MCF 10A (cell line): ENCODE measurements at regions of chr2 and their contacts with region 1.

Region 1: DNA sequence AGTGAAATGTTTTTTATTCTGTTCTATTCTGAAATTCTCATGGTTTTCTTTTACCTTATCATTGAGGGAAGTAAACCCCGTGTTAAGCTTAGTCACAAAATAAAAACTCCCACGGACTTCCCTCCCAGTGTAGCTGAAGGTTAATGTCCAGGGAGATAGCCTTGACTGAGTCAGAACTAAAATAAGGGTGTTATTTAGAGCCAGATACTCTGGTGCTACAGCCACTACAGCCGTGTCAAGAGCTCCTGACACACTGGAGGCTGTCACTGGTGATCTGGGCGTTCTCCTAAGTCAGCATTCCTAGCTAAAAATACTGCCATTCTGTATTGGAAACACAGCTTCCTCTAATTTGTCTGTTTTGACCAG is 82.0 kb upstream of the RANBP2 start:
- DNase-seq: peak; percentile 46
- H3K4me3 Mint-ChIP-seq: no peak overlapping the region
- H3K27ac Mint-ChIP-seq: peak overlapping the region; percentile 35
- H3K4me1 Mint-ChIP-seq: peaks cover 38% of the 10 kb centered on the region
- H3K27me3 Mint-ChIP-seq: no peaks in the 10 kb centered on the region
- CTCF ChIP-seq: no peak

Region 2: DNA sequence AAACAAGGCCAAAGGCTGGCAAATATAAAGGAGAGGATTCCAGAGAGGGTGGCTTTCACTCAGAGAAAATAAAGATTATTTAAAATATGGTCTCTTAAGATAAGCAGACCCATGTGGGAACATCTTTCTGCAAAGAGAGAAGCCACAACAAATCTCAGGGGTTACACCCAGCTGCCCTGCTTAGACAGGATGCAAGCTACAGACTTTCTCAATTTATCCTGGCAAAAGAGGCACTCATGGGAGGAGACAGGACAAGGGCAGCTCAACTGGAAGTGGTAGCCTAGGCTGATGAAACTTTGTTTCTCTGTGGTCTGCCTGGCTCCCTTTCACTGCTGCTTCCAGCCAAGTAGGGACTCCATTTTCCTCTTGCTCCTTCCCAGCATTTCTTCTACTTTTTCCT is 285.4 kb before region 1 on chr2:
- CTCF ChIA-PET with region 1: interaction called, 16 read pairs
- POLR2A ChIA-PET with region 1: no interaction called
- intact Hi-C with region 1: loop called (anchors 1 kb)
- DNase-seq: peak; percentile 11
- H3K4me3 Mint-ChIP-seq: no peak overlapping the region
- H3K27ac Mint-ChIP-seq: no peak overlapping the region
- H3K4me1 Mint-ChIP-seq: peaks cover 6% of the 10 kb centered on the region
- H3K27me3 Mint-ChIP-seq: no peaks in the 10 kb centered on the region
- CTCF ChIP-seq: no peak

Region 3: GRCh38 chr2:108533832-108534583 is 103.3 kb before region 1 on chr2 and contains the start of gene LIMS1:
- CTCF ChIA-PET with region 1: interaction called, 16 read pairs
- POLR2A ChIA-PET with region 1: interaction called, 8 read pairs
- intact Hi-C with region 1: no loop called
- DNase-seq: peak; percentile 90
- H3K4me3 Mint-ChIP-seq: peak within 1 kb of the TSS; percentile 90
- H3K27ac Mint-ChIP-seq: peak within 1 kb of the TSS; percentile 83
- H3K4me1 Mint-ChIP-seq: peaks cover 34% of the 10 kb centered on the region
- H3K27me3 Mint-ChIP-seq: no peaks in the 10 kb centered on the region
- CTCF ChIP-seq: no peak
- total RNA-seq, gene LIMS1: 70.9 and 74.9 TPM in 2 replicates

Region 4: DNA sequence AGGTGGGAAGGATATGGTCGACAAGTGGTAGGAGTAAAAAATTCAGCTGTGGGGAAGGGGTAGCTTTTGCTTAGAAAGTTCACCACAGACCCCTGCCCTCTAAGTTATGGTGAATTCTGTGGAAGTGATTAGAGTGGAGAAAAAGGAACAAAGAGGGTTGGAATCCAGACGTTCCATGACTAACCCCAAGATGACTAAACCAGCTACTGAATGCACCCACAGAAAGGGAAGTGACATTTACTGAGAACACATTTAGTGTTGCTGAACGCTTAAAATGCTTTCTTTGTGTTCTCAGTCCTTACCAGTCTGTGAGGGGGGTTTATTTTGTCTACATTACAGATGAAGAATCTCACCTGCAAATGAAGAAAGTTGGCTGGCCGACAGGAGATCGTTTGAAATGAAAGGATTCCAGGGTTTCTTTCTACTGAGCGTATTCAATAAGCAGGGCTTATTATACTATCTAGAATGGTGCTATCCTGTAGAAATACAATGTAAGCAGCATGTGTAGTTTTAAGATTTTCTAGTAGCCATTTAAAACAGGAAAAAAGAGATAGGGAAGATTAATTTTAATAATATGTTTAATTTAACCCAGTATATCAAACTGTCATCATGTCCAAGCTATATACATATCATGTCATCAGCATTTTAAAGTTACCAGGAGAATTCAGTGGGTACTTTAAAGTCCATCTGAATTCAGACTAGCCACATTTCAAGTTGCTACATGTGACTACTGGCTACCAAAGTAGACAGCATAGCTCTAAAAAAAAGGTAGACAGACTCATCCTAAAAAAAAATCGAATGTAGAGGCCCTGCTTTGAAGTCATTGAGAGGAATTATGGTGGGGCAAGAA is 42.9 kb before region 1 on chr2:
- CTCF ChIA-PET with region 1: interaction called, 120 read pairs
- POLR2A ChIA-PET with region 1: interaction called, 22 read pairs
- intact Hi-C with region 1: loop called (anchors 2 kb)
- DNase-seq: peak; percentile 72
- H3K4me3 Mint-ChIP-seq: peak overlapping the region; percentile 20
- H3K27ac Mint-ChIP-seq: peak overlapping the region; percentile 77
- H3K4me1 Mint-ChIP-seq: peaks cover 63% of the 10 kb centered on the region
- H3K27me3 Mint-ChIP-seq: no peaks in the 10 kb centered on the region
- CTCF ChIP-seq: no peak

Region 5: GRCh38 chr2:108615480-108616090 is 21.7 kb before region 1 on chr2:
- CTCF ChIA-PET with region 1: interaction called, 207 read pairs
- POLR2A ChIA-PET with region 1: interaction called, 26 read pairs
- intact Hi-C with region 1: no loop called
- DNase-seq: no peak
- H3K4me3 Mint-ChIP-seq: no peak overlapping the region
- H3K27ac Mint-ChIP-seq: no peak overlapping the region
- H3K4me1 Mint-ChIP-seq: peaks cover 63% of the 10 kb centered on the region
- H3K27me3 Mint-ChIP-seq: no peaks in the 10 kb centered on the region
- CTCF ChIP-seq: no peak

Region 6: GRCh38 chr2:108786354-108787199 is 149.3 kb after region 1 on chr2 and contains the start of gene CCDC138:
- CTCF ChIA-PET with region 1: no interaction called
- POLR2A ChIA-PET with region 1: no interaction called
- intact Hi-C with region 1: no loop called
- DNase-seq: peak; percentile 89
- H3K4me3 Mint-ChIP-seq: peak within 1 kb of the TSS; percentile 95
- H3K27ac Mint-ChIP-seq: peak within 1 kb of the TSS; percentile 93
- H3K4me1 Mint-ChIP-seq: peaks cover 5% of the 10 kb centered on the region
- H3K27me3 Mint-ChIP-seq: no peaks in the 10 kb centered on the region
- CTCF ChIP-seq: no peak
- total RNA-seq, gene CCDC138: 3.5 and 4.3 TPM in 2 replicates

Region 7: GRCh38 chr2:109457794-109458193 is 820.5 kb after region 1 on chr2:
- CTCF ChIA-PET with region 1: no interaction called
- POLR2A ChIA-PET with region 1: no interaction called
- intact Hi-C with region 1: no loop called
- DNase-seq: no peak
- H3K4me3 Mint-ChIP-seq: no peak overlapping the region
- H3K27ac Mint-ChIP-seq: no peak overlapping the region
- H3K4me1 Mint-ChIP-seq: no peaks in the 10 kb centered on the region
- H3K27me3 Mint-ChIP-seq: no peaks in the 10 kb centered on the region
- CTCF ChIP-seq: no peak